ENCODE measurements at regions of chr7 and their contacts with region 1.

Region 1: DNA sequence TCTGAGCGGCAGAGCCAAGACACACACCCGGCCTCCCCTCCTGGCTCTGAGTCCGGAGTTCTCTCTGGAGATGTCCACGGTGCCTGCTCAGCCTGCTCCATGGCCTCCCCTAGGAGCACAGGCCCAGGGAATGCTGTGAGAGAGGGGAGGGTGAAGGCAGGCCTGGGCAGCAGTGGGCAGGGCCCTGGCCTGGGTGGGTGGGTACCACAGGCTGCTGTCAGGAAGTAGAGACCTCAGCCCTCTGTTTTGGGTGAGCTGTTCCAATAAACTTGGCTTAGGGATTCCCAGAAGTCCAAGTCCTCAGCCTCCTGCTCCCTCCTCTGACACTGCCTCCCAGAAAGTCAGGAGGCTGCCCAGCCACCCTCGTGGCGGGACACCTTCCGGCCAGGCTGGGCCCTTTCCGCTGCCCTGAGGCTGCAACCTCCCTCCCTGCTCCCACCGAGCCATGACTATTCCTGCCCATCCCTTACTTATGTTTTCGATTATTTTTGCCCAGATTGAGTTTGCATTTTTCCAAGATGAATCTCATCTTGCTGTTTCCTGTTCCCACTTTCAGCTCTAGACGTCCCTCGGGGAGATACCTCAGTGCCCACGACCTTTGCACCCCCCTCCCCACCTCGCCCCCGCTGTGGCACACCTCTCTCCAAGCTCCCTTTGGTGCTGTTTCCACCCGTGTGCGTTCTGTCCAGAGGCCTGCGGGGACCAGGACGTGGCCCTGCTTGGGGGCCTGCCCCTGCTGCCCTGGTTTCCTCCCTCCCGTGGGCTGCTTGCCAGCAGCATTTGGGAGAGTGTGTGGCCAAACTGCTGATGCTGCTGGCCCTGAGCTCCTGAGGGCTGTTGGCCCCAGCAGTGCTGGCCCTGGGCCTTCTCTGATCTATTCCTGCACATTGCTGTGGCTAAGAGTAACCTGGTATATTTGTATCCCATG is 5.8 kb upstream of the POLM start:
- DNase-seq: peak; percentile 67
- H3K4me3 ChIP-seq: no peak overlapping the region
- CTCF ChIP-seq: no peak

Region 2: DNA sequence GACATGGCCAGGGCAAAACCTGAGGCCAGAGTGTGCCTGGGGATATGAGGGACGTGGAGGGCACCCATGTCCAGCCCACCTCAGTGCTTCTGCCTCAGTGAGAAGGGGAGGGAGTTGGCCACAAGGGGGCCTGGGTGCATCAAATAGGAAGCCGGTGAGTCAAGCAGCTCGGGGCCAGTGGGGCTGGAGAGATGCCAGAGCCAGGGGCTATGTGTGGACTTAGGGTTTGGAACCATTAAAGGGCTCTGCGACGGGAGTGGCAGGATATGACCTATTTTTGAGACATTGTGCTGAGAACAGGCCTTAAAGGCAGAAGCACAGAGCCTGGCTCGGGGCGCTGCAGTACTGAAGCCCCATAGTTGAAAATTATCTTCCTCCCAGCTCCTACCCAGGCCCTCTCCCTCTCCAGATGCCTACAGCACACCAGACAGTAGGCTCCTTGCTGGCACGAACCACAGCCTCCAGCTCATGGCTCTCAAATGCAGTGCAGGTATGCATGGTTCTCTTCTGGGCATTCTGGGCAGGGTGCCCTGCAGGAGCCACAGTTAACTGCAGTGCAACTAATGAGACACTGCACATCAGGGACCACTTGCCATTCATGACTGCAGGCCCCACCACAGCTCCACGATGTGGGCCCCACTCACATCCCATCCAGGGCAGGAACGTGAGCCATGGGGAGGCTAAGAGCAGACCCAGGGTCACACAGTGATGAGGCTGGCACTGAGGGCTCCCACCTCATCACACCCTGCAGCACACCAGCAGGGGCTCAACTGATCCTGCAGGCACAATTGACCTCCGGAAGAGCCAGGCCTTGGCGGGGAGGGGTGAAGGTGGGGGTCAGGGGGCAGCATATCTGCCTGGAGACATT is 15.6 kb before region 1 on chr7:
- CTCF ChIA-PET with region 1: interaction called, 10 read pairs
- POLR2A ChIA-PET with region 1: no interaction called
- DNase-seq: no peak
- H3K4me3 ChIP-seq: no peak overlapping the region
- CTCF ChIP-seq: peak; percentile 94

Region 3: GRCh38 chr7:44103923-44104859 is 16.0 kb after region 1 on chr7 and contains the start of gene AEBP1:
- CTCF ChIA-PET with region 1: interaction called, 15 read pairs
- POLR2A ChIA-PET with region 1: interaction called, 12 read pairs
- DNase-seq: no peak
- H3K4me3 ChIP-seq: peak within 1 kb of the TSS; percentile 75
- CTCF ChIP-seq: no peak

Region 4: DNA sequence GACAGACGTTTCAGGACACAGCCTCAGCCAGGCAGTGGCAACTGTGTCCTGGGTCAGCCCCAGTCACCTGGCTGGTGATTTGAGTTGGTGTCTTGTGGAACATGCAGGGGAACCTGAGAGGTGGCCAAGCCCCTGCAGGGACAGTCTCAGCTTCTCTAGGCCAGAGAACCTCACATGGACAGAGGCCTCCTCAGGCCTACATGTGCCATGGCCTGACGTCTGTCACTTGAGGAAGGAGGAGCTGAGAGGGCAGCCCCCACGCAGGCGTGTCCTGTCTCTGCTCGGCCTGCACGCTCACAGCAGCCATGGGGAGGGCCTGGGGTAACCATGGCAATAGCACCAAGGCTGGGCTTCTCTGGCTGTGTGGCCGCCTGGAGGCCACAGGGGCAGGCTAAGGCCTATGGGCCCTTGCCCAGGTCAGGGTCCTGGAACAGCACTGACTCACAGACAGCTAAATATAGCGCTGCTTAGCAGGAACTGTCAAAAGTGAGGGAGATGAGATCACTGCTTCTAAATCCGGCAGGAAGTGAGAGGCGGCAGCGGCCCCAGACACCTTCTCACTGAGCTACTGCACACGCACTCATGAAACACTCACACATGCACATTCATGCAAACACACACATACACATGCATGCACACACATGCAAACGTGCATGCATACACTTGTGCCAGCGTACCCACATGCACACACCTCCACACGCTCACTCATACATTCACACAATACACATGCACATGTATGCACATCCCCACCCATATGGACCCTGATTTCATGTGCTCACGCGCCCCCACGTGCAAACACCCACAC is 169.6 kb after region 1 on chr7:
- CTCF ChIA-PET with region 1: no interaction called
- POLR2A ChIA-PET with region 1: no interaction called
- DNase-seq: peak; percentile 49
- H3K4me3 ChIP-seq: no peak overlapping the region
- CTCF ChIP-seq: no peak

Measured in AG04449 (cell line).